ENCODE measurements at regions of chr3 and their contacts with region 1.

Region 1: DNA sequence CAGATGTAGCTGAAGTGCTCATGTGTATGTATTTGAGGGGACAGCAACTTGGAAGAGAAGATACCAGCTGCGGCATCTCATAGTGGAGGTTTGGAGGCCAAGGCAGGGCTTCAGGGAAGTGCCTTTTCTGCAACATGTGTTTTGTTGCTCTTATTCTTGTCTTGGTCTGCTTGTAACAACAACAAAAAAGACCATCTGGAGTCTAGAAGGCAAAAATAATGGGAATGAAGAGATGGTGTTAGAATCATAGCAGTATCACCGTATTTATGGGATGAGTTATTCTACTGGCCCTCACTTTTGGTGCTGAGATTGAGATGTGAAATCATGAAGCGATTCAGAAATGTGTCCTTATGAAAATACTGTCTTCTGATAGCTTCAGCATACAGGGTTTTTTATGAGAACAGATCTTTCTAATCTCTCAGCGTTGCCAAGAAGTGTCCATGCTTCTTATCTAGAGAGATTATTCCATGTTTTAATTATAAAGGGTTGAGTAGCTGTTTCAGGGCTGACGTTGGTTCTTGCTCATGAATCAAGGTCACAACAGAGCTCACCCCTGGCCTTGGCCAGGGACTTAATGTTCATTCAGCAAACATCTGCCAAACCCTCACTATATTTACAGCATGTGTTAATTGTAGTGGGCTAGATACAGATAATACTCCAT is 58.0 kb downstream of the ITPR1 start:
- DNase-seq: no peak
- H3K4me3 ChIP-seq: no peak overlapping the region
- H3K27ac ChIP-seq: no peak overlapping the region
- H3K4me1 ChIP-seq: peaks cover 3% of the 10 kb centered on the region
- H3K27me3 ChIP-seq: no peaks in the 10 kb centered on the region
- CTCF ChIP-seq: no peak
- POLR2A ChIP-seq: no peak

Region 2: GRCh38 chr3:3893590-3893989 is 657.6 kb before region 1 on chr3:
- intact Hi-C with region 1: loop called (anchors 10 kb)
- DNase-seq: no peak
- H3K4me3 ChIP-seq: no peak overlapping the region
- H3K27ac ChIP-seq: no peak overlapping the region
- H3K4me1 ChIP-seq: no peaks in the 10 kb centered on the region
- H3K27me3 ChIP-seq: no peaks in the 10 kb centered on the region
- CTCF ChIP-seq: no peak
- POLR2A ChIP-seq: no peak

Region 3: DNA sequence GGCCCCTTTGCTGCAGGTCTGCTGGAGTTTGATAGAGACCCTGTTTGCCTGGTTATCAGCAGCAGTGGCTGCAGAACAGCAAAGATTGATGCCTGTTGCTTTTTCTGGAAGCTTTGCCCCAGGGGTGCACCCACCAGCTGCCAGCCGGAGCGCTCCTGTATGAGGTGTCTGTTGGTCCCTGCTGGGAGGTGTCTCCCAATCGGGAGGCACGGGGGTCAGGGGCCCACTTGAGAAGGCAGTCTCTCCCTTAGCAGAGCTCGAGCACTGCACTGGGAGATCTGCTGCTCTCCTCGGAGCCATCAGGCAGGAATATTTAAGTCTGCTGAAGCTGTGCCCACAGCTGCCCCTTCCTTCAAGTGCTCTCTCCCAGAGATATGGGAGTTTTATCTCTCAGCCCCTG is 1484.5 kb after region 1 on chr3:
- intact Hi-C with region 1: no loop called
- DNase-seq: no peak
- H3K4me3 ChIP-seq: no peak overlapping the region
- H3K27ac ChIP-seq: no peak overlapping the region
- H3K4me1 ChIP-seq: no peaks in the 10 kb centered on the region
- H3K27me3 ChIP-seq: no peaks in the 10 kb centered on the region
- CTCF ChIP-seq: no peak
- POLR2A ChIP-seq: no peak